Panc1 (cell line): ENCODE measurements at regions of chr7 and their contacts with region 1.

Region 1: GRCh38 chr7:121547544-121548092 is 151.5 kb upstream of the FAM3C start:
- DNase-seq: no peak
- ATAC-seq: peak; percentile 82
- H3K4me3 ChIP-seq: no peak overlapping the region
- H3K27ac ChIP-seq: no peak overlapping the region
- H3K4me1 ChIP-seq: peaks cover 7% of the 10 kb centered on the region; the same call in 1 of the 2 replicates
- H3K27me3 ChIP-seq: no peaks in the 10 kb centered on the region
- CTCF ChIP-seq: peak; percentile 71; the same call in 1 of the 2 replicates

Region 2: GRCh38 chr7:121126801-121127534 is 420.6 kb before region 1 on chr7:
- CTCF ChIA-PET with region 1: no interaction called
- POLR2A ChIA-PET with region 1: no interaction called
- in situ Hi-C with region 1: no loop called
- intact Hi-C with region 1: loop called (anchors 5 kb)
- DNase-seq: peak; percentile 25
- ATAC-seq: no peak
- H3K4me3 ChIP-seq: no peak overlapping the region
- H3K27ac ChIP-seq: no peak overlapping the region
- H3K4me1 ChIP-seq: no peaks in the 10 kb centered on the region
- H3K27me3 ChIP-seq: no peaks in the 10 kb centered on the region
- CTCF ChIP-seq: peak; percentile 28; the same call in 1 of the 2 replicates

Region 3: GRCh38 chr7:121366852-121367431 is 180.7 kb before region 1 on chr7:
- CTCF ChIA-PET with region 1: interaction called, 6 read pairs
- POLR2A ChIA-PET with region 1: no interaction called
- in situ Hi-C with region 1: no loop called
- intact Hi-C with region 1: loop called (anchors 2 kb)
- DNase-seq: peak; percentile 30
- ATAC-seq: no peak
- H3K4me3 ChIP-seq: no peak overlapping the region
- H3K27ac ChIP-seq: no peak overlapping the region
- H3K4me1 ChIP-seq: no peaks in the 10 kb centered on the region; the same call in none of the 2 replicates
- H3K27me3 ChIP-seq: no peaks in the 10 kb centered on the region
- CTCF ChIP-seq: peak; percentile 75; the same call in 1 of the 2 replicates

Region 4: DNA sequence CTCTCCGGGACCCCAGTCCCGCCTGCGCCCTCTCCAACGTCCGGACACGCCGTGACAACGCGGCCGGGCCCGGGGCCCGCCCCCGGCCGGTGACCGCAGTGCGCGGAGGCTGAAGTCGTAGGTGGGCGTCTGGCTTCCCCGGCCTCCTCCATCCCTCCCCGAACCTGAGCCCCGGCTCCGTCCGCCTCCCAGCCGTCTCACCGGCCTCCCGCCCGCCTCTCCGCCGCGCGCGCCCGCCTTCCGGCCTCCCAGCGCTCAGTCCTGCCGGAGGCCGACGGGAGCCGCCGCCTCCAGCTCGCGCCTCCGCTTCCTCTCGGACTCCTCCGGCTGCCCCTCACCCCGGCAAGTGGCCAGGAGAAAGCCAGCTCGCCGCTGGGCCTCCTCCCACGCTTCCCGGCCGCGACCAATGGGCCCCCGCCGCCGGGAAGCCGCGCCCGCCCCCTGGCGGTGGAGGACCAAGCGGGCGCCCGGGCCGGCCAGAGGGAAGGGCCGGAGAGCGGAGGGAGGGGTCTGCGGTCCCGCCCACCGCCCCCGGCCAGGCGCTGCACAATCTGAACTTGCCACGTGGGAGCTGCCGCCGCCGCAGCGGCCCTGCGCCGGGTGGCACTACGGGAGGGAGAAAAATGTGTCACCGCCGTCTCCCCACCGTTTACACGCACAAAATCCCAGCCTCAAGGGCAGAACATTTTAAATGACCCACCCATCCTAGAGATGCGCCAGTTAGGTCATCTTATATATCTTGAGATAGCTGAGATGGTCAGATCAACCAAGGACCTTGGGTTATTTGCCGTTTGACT is 151.5 kb before region 1 on chr7 and contains the start of gene FAM3C:
- CTCF ChIA-PET with region 1: interaction called, 3 read pairs
- POLR2A ChIA-PET with region 1: no interaction called
- in situ Hi-C with region 1: no loop called
- intact Hi-C with region 1: loop called (anchors 2 kb)
- DNase-seq: peak; percentile 67
- ATAC-seq: peak; percentile 97
- H3K4me3 ChIP-seq: peak within 1 kb of the TSS; percentile 83 to 97
- H3K27ac ChIP-seq: peak within 1 kb of the TSS; percentile 97
- H3K4me1 ChIP-seq: peaks cover 18% of the 10 kb centered on the region
- H3K27me3 ChIP-seq: no peaks in the 10 kb centered on the region
- CTCF ChIP-seq: peak; percentile 98
- total RNA-seq, gene FAM3C: 55.4 TPM

Region 5: DNA sequence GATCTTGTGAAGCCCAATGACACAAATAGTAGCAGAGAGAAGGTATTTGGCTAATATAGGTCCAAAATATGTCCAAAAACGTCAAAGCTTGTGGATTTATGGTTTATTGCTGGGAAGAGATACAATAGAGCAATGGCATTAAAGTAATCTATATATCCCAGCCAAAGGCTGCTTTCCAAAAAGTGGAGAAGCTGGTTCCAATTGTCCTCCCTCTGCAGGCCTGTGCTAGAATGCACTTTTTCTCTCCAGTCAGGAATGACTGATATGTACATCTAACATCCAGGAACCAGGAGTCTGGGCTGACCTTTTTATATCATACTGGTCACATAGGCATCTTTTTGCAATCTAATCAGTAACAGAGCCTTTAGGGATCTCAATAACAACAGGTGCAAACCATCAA is 15.6 kb after region 1 on chr7:
- CTCF ChIA-PET with region 1: no interaction called
- POLR2A ChIA-PET with region 1: no interaction called
- in situ Hi-C with region 1: no loop called
- intact Hi-C with region 1: no loop called
- DNase-seq: no peak
- ATAC-seq: no peak; the same call in 1 of the 2 replicates
- H3K4me3 ChIP-seq: no peak overlapping the region
- H3K27ac ChIP-seq: no peak overlapping the region
- H3K4me1 ChIP-seq: no peaks in the 10 kb centered on the region
- H3K27me3 ChIP-seq: no peaks in the 10 kb centered on the region
- CTCF ChIP-seq: peak; percentile 28; the same call in 1 of the 2 replicates

Region 6: DNA sequence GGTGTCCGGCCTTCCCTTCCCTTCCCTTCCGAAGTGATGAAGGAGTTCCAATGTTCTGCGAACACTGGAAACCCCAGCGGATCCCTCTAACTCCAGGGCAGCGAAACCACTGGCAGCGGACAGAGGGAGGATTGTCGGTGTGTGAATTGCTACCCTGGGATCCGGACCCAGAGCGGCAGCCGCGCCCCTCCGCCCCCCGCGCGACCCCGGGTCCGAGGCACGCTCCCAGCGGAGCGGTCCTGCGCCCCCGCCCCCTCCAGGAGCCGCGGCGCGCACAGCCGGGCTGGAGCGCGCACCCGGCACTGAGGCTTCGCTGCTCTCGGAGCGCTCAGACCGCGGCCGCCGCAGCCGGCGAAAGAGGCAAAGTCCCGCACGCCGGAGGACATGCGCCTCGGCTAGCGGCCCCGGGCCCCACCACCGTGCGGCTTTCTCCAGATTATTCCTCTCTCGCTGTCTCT is 325.2 kb after region 1 on chr7 and contains the start of gene PTPRZ1:
- CTCF ChIA-PET with region 1: no interaction called
- POLR2A ChIA-PET with region 1: no interaction called
- in situ Hi-C with region 1: no loop called
- intact Hi-C with region 1: no loop called
- DNase-seq: no peak
- ATAC-seq: peak; percentile 94
- H3K4me3 ChIP-seq: peak within 1 kb of the TSS; percentile 36 to 65
- H3K27ac ChIP-seq: no peak within 1 kb of the TSS
- H3K4me1 ChIP-seq: no peaks in the 10 kb centered on the region
- H3K27me3 ChIP-seq: peaks cover 42% of the 10 kb centered on the region
- CTCF ChIP-seq: no peak
- total RNA-seq, gene PTPRZ1: 0.05 TPM

Region 7: DNA sequence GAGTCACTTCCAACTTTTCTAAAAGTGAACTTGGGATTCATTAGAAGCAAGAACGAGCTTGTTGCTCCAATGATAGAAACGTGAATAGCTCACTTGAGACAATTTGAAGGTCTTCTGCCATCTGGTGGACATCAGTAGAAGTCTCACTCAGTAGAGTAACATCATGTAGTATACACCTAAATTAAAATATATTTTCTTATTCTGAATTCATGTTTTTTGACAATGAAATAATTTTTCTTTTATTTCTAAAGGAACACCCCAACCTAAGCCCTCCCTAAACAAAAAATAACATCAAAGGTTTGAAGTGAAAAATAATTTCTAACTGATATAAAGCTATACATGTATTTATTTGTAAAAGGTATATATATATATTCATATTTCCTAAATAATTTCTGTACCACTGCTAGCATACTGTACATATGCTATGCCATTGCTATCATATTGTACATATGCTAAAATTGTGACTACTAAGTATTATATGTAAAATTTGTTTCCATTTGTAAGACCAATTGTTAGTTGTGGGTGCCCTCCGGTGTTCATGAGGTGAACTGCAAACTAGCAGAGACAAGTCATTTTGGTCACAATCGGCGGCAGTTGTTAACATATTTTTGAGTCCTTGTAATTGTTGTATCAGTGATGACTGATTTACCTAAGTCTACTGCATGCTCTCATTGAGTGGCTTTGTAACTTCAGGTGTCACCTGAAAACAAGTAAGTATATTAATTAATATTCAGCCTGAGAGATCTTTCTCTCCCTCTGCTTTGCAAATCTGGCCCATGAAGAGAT is 447.2 kb after region 1 on chr7:
- CTCF ChIA-PET with region 1: interaction called, 7 read pairs
- POLR2A ChIA-PET with region 1: no interaction called
- in situ Hi-C with region 1: no loop called
- intact Hi-C with region 1: loop called (anchors 5 kb)
- DNase-seq: peak; percentile 64
- ATAC-seq: peak; percentile 89
- H3K4me3 ChIP-seq: no peak overlapping the region
- H3K27ac ChIP-seq: no peak overlapping the region
- H3K4me1 ChIP-seq: no peaks in the 10 kb centered on the region
- H3K27me3 ChIP-seq: no peaks in the 10 kb centered on the region; the same call in 1 of the 2 replicates
- CTCF ChIP-seq: peak; percentile 79